ENCODE measurements at regions of chrX and their contacts with region 1.

Region 1: DNA sequence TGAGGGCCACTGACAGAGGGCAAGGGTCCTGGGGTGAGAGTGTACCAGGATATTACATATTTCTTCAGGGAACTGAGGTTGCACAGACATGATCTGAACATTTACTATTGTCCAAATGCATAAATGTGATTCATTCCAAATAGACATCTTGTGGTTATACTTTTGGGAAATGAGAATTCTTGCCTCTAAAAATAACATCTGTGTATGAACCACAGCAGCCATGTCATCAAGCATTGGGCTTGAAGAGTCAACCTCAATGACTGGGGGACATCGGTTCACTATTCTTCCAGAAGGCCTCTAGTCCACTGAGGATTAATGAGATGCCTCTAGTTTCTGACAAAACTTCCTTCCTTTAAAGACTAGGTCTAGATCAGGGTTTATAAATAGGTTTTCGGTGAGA is 193.1 kb upstream of the GPC4 start:
- H3K4me3 Mint-ChIP-seq: no peak overlapping the region
- H3K27ac Mint-ChIP-seq: no peak overlapping the region
- H3K4me1 Mint-ChIP-seq: peaks cover 8% of the 10 kb centered on the region
- H3K27me3 Mint-ChIP-seq: peaks cover 2% of the 10 kb centered on the region

Region 2: DNA sequence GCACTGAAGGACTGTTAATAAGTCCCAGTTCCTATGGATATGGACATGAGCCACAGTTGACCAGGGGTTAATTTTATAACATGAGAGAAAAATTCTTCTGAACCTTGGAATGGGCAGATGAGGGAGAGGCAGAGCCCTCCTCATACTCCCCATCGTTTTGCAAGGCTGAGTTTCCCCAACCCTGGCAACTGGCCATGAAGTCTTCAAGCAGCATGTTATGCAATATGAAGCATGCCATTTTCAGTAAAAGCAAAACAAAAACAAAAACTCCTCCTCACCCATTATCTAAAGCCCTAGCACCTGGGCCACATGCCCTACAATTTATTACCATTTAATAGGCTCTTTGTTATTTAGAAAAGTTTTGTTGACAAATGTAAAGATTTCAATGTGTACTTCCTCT is 257.7 kb before region 1 on chrX:
- intact Hi-C with region 1: no loop called
- H3K4me3 Mint-ChIP-seq: no peak overlapping the region
- H3K27ac Mint-ChIP-seq: no peak overlapping the region
- H3K4me1 Mint-ChIP-seq: no peaks in the 10 kb centered on the region
- H3K27me3 Mint-ChIP-seq: no peaks in the 10 kb centered on the region

Region 3: DNA sequence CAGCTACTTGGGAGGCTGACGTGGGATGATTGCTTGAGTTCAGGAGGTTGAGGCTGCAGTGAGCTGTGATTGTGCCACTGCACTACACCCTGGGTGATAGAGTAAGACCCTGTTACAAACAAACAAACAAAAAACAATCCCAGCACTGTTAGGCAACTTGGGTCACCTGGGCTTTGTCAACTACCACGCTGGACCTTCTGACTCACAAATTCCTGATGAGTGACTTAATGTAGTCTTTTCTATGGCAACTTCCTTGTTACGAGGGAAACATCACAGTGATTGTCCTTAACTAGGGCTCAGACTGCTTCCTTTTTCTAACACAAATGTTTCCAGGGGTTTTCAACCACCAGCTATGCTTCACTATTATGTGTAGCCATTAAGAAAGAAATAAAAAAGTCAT is 64.3 kb before region 1 on chrX:
- intact Hi-C with region 1: loop called (anchors 10 kb)
- H3K4me3 Mint-ChIP-seq: no peak overlapping the region
- H3K27ac Mint-ChIP-seq: no peak overlapping the region
- H3K4me1 Mint-ChIP-seq: peaks cover 10% of the 10 kb centered on the region
- H3K27me3 Mint-ChIP-seq: no peaks in the 10 kb centered on the region

Region 4: GRCh38 chrX:133569218-133569617 is 39.2 kb before region 1 on chrX:
- intact Hi-C with region 1: loop called (anchors 5 kb)
- H3K4me3 Mint-ChIP-seq: no peak overlapping the region
- H3K27ac Mint-ChIP-seq: no peak overlapping the region
- H3K4me1 Mint-ChIP-seq: no peaks in the 10 kb centered on the region
- H3K27me3 Mint-ChIP-seq: peaks cover 3% of the 10 kb centered on the region

Region 5: DNA sequence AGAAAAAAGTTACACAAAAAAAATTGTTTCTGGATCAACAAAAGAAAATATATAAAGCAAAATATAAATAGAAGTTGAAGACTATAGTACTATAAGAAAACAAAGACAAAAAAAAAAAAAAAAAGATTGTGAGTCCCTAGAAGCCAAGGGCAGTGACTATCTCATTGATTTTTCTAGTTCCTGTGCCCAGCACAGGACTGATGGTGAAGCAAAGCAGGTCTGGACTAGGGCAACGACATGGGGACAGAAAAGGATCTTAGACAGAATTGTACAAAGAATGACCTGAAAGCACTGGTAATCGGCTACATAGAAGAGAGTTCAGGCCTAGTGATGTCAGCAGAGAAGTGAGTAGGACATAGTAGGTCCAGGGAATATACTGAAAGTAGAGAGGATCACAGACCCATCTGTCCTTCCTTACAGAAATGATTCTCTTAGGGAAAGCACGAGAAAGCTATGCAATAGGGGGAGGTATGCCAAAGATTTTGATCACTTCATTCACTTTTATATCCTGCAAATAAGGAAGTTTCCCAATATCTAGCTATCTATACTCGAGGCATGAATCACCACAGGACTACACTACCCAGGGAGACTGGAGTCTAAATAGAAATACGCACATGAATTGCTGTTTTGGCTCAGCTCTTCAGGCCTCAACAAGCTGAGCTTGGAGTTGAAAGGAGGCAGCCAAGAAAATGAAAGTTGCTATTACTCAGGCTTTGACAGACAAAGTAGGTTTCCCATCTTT is 37.7 kb after region 1 on chrX:
- intact Hi-C with region 1: loop called (anchors 5 kb)
- H3K4me3 Mint-ChIP-seq: no peak overlapping the region
- H3K27ac Mint-ChIP-seq: no peak overlapping the region
- H3K4me1 Mint-ChIP-seq: peaks cover 36% of the 10 kb centered on the region
- H3K27me3 Mint-ChIP-seq: no peaks in the 10 kb centered on the region

Region 6: GRCh38 chrX:134603806-134604700 is 995.6 kb after region 1 on chrX:
- intact Hi-C with region 1: no loop called
- H3K4me3 Mint-ChIP-seq: no peak overlapping the region
- H3K27ac Mint-ChIP-seq: no peak overlapping the region
- H3K4me1 Mint-ChIP-seq: no peaks in the 10 kb centered on the region
- H3K27me3 Mint-ChIP-seq: no peaks in the 10 kb centered on the region